Mammary epithelial cell (primary cell): ENCODE measurements at regions of chr5 and their contacts with region 1.

Region 1: DNA sequence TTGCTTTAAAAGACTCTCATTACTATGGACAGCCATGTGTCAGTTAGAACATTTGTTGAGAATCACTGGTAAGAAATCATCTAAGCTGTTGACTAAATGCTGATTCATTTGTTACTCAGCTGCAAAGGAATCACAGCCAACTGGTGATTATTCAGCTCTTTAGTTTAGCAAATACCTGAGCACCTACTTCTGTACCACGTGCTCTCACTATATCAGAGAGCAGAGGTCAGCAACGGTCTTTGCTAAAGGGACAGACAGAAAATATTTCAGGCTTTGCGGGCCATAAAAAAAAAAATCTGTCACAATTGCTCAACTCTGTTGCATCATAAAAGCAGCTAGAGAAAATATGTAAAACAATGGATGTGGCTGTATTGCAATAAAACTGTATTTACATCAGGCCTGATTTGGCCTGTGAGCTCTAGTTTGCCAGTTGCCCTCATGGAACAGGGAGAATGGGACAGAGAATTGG is 377.6 kb downstream of the DNAH5 start:
- DNase-seq: peak; percentile 97
- H3K4me3 ChIP-seq: no peak overlapping the region
- H3K27ac ChIP-seq: peak overlapping the region; percentile 98
- H3K4me1 ChIP-seq: peaks cover 32% of the 10 kb centered on the region
- H3K27me3 ChIP-seq: no peaks in the 10 kb centered on the region
- CTCF ChIP-seq: no peak

Region 2: GRCh38 chr5:12672141-12672540 is 894.8 kb before region 1 on chr5:
- CTCF ChIA-PET with region 1: no interaction called
- dilution Hi-C with region 1: no loop called
- in situ Hi-C with region 1: no loop called
- intact Hi-C with region 1: no loop called
- DNase-seq: no peak
- H3K4me3 ChIP-seq: no peak overlapping the region
- H3K27ac ChIP-seq: no peak overlapping the region
- H3K4me1 ChIP-seq: no peaks in the 10 kb centered on the region
- H3K27me3 ChIP-seq: no peaks in the 10 kb centered on the region
- CTCF ChIP-seq: no peak

Region 3: GRCh38 chr5:13427871-13428725 is 138.8 kb before region 1 on chr5:
- CTCF ChIA-PET with region 1: no interaction called
- dilution Hi-C with region 1: no loop called
- in situ Hi-C with region 1: no loop called
- intact Hi-C with region 1: no loop called
- DNase-seq: no peak
- H3K4me3 ChIP-seq: no peak overlapping the region
- H3K27ac ChIP-seq: no peak overlapping the region
- H3K4me1 ChIP-seq: no peaks in the 10 kb centered on the region
- H3K27me3 ChIP-seq: peaks cover 2% of the 10 kb centered on the region
- CTCF ChIP-seq: no peak

Region 4: DNA sequence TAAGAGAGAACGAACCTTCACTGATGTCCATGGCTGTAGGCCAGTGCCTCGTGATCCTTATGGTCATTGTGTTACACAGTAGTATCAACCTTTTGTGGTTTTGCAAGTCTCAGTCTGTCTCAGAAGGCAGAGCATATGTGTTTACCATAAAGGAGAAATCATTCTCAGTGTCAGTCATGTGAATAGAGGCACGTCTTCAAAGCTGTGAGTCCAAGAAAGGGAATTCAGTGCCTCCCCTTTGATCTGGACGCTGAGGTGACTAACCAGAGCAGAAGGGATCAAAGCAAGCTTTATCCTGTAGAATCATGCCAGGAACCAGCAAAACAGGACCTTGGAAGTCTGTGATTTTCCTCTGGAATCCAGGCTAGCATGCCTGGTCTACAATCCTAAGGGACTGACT is 56.3 kb before region 1 on chr5:
- CTCF ChIA-PET with region 1: no interaction called
- dilution Hi-C with region 1: no loop called
- in situ Hi-C with region 1: loop called in 1 of 2 experiments (anchors 5 kb)
- intact Hi-C with region 1: loop called (anchors 2 kb)
- DNase-seq: peak; percentile 96
- H3K4me3 ChIP-seq: no peak overlapping the region
- H3K27ac ChIP-seq: peak overlapping the region; percentile 81
- H3K4me1 ChIP-seq: peaks cover 37% of the 10 kb centered on the region
- H3K27me3 ChIP-seq: no peaks in the 10 kb centered on the region
- CTCF ChIP-seq: no peak

Region 5: DNA sequence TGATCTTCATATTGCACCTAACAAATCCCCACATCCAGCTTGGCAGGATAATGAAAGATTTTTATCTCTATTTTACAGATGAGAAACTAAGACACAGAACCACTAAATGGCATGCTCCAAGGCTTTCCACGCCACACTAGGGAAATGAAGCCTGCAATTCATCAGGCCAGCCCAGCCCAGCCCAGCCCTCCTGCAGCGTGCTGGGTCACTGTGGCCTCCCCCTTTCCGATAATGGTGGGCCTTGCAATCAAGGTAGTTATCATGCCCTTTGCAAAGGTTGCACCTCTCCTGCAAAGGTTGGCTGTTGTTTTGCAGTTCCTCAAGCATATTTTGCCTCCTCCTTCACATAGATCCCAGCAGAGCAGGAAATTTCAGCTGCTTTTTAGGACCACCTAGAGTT is 45.0 kb before region 1 on chr5:
- CTCF ChIA-PET with region 1: no interaction called
- dilution Hi-C with region 1: no loop called
- in situ Hi-C with region 1: no loop called
- intact Hi-C with region 1: no loop called
- DNase-seq: no peak
- H3K4me3 ChIP-seq: no peak overlapping the region
- H3K27ac ChIP-seq: no peak overlapping the region
- H3K4me1 ChIP-seq: no peaks in the 10 kb centered on the region
- H3K27me3 ChIP-seq: no peaks in the 10 kb centered on the region
- CTCF ChIP-seq: no peak

Region 6: GRCh38 chr5:13591621-13592020 is 24.7 kb after region 1 on chr5:
- CTCF ChIA-PET with region 1: no interaction called
- dilution Hi-C with region 1: no loop called
- in situ Hi-C with region 1: no loop called
- intact Hi-C with region 1: loop called (anchors 1 kb)
- DNase-seq: peak; percentile 91
- H3K4me3 ChIP-seq: no peak overlapping the region
- H3K27ac ChIP-seq: peak overlapping the region; percentile 66
- H3K4me1 ChIP-seq: peaks cover 27% of the 10 kb centered on the region
- H3K27me3 ChIP-seq: no peaks in the 10 kb centered on the region
- CTCF ChIP-seq: no peak

Region 7: GRCh38 chr5:13814302-13814701 is 247.4 kb after region 1 on chr5:
- CTCF ChIA-PET with region 1: no interaction called
- dilution Hi-C with region 1: no loop called
- in situ Hi-C with region 1: no loop called
- intact Hi-C with region 1: loop called (anchors 5 kb)
- DNase-seq: peak; percentile 33
- H3K4me3 ChIP-seq: no peak overlapping the region
- H3K27ac ChIP-seq: no peak overlapping the region
- H3K4me1 ChIP-seq: peaks cover 2% of the 10 kb centered on the region
- H3K27me3 ChIP-seq: no peaks in the 10 kb centered on the region
- CTCF ChIP-seq: peak; percentile 22 to 47

Region 8: DNA sequence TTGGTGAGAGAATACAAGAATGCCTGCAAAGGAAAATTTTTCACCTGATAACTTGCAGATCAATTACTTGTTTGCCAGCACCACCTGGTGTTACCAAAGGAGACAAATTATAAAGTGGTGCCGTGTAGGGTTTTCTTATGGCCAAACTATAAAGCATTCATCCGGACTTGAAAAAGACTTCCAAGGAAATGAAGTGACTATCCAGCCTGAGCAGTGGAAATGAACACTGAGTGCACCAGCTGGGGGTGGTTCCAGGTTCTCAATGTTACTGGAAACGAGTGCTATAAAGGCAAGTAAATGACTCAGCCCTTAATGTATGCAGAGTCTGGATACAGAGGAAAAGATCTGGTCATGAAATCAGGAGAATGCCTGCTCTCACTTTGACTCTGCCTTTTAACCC is 264.4 kb after region 1 on chr5:
- CTCF ChIA-PET with region 1: no interaction called
- dilution Hi-C with region 1: no loop called
- in situ Hi-C with region 1: no loop called
- intact Hi-C with region 1: loop called (anchors 5 kb)
- DNase-seq: peak; percentile 74
- H3K4me3 ChIP-seq: no peak overlapping the region
- H3K27ac ChIP-seq: peak overlapping the region; percentile 64
- H3K4me1 ChIP-seq: peaks cover 23% of the 10 kb centered on the region
- H3K27me3 ChIP-seq: no peaks in the 10 kb centered on the region
- CTCF ChIP-seq: peak; percentile 20 to 49

Region 9: GRCh38 chr5:13910637-13911288 is 343.9 kb after region 1 on chr5:
- CTCF ChIA-PET with region 1: no interaction called
- dilution Hi-C with region 1: no loop called
- in situ Hi-C with region 1: no loop called
- intact Hi-C with region 1: no loop called
- DNase-seq: no peak
- H3K4me3 ChIP-seq: no peak overlapping the region
- H3K27ac ChIP-seq: no peak overlapping the region
- H3K4me1 ChIP-seq: peaks cover 4% of the 10 kb centered on the region
- H3K27me3 ChIP-seq: no peaks in the 10 kb centered on the region
- CTCF ChIP-seq: no peak